HAP-1 (cell line): ENCODE measurements at regions of chr1 and their contacts with region 1.

Region 1: DNA sequence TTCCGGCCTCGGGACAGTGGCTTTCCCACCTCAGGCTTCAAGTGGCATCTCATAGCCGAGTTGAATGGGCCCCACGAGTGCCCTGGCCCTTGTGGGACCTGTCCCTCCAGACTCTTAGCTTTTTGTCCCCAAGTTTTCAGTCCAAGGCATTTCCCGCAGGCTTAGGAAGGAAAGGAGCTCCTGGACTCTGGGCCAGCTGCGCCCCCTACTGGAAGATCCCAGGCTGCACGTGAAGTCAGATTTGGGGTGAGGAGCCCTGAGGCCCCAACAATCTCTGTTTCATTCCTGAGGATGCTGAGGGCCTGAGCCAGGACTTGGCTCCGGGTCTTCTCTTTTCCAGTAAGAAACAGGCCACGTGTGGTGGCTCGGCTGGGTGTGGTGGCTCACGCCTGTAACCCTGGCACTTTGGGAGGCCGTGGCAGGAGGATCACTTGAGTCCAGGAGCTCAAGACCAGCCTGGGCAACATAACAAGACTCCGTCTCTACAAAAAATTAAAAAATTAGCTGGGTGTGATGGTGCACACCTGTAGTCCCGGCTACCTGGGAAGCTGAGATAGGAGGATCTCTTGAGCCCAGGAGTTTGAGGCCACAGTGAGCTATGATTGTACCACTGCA is 67.4 kb downstream of the ARHGEF10L start:
- DNase-seq: peak; percentile 25 to 85
- H3K4me3 ChIP-seq: no peak overlapping the region
- H3K4me1 ChIP-seq: no peaks in the 10 kb centered on the region
- H3K27me3 ChIP-seq: no peaks in the 10 kb centered on the region

Region 2: DNA sequence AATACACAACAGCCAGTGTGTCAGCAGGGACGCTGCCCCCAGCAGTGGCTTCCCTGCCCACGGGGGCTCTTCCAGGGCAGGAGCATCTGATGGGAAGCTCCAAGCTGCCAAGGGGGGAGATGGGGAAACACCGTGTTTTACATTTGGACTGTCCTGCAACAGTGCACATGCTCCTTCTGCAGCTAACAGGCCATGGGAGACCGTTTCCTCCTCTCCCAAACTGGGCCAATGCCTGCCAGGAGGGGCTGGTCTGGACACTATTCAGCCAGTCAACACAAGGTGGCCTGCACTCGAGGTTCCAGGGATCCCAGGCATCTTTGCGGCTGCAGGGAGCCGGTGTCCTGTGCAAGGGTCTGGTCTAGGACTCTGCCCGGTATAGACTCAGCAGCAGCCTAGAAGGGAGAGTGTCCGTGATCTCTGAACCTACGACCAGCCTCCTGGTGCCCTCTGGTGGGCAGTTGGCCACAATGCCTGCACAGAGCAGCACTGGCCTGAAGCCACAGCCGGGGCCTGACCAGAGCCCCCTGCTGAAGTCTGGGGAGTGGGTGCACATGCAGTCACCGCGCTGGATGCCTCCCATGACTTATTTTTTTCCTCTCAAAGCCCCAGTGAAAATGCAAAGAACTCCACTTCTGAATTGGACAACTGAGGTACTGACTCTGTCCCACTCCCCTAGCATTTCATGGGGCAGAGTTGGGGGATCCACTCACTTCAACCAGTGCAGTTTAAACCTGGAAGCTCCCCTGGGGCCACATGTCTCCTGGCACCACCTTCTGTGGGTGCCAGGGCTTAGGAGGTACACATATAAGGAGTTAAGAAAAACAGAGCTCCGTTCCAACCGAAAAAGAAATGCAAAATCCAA is 200.8 kb before region 1 on chr1:
- in situ Hi-C with region 1: loop called (anchors 10 kb)
- DNase-seq: peak; percentile 36 to 81
- H3K4me3 ChIP-seq: no peak overlapping the region
- H3K4me1 ChIP-seq: no peaks in the 10 kb centered on the region; the same call in 1 of the 2 replicates
- H3K27me3 ChIP-seq: no peaks in the 10 kb centered on the region

Region 3: GRCh38 chr1:17502326-17502778 is 104.6 kb before region 1 on chr1:
- in situ Hi-C with region 1: loop called (anchors 5 kb)
- DNase-seq: peak; percentile 70 to 91
- H3K4me3 ChIP-seq: no peak overlapping the region
- H3K4me1 ChIP-seq: no peaks in the 10 kb centered on the region
- H3K27me3 ChIP-seq: no peaks in the 10 kb centered on the region